OCI-LY7 (cell line): ENCODE measurements at regions of chr5 and their contacts with region 1.

Region 1: DNA sequence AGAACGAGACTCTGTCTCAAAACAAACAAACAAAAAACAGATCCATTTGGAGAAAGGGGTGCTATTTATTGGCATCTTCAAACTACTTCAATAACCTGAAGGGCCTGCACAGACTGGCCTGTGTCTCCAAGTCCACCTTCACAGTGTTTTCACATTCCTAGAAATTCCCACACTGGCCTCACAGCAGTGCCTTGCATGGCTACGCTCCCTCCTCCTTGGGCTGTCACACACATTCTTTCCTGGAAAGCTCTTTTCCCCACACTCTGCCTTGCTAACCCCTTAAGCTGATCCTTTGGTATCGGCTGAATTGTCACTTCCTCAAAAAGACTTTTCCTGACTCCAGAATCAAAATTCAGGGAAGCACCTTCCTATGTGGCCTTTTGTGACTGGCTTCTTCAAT is 19.8 kb downstream of the FAM151B start:
- DNase-seq: no peak
- H3K4me3 ChIP-seq: no peak overlapping the region
- H3K27ac ChIP-seq: no peak overlapping the region
- H3K4me1 ChIP-seq: no peaks in the 10 kb centered on the region
- CTCF ChIP-seq: no peak

Region 2: GRCh38 chr5:80268916-80269315 is 238.7 kb before region 1 on chr5:
- CTCF ChIA-PET with region 1: no interaction called
- POLR2A ChIA-PET with region 1: no interaction called
- intact Hi-C with region 1: no loop called
- DNase-seq: no peak
- H3K4me3 ChIP-seq: no peak overlapping the region
- H3K27ac ChIP-seq: no peak overlapping the region
- H3K4me1 ChIP-seq: peaks cover 21% of the 10 kb centered on the region
- CTCF ChIP-seq: no peak

Region 3: GRCh38 chr5:80487829-80488721 is 19.6 kb before region 1 on chr5 and contains the start of gene FAM151B:
- CTCF ChIA-PET with region 1: no interaction called
- POLR2A ChIA-PET with region 1: interaction called, 3 read pairs
- intact Hi-C with region 1: loop called (anchors 1 kb)
- DNase-seq: peak; percentile 51
- H3K4me3 ChIP-seq: peak within 1 kb of the TSS; percentile 54
- H3K27ac ChIP-seq: no peak within 1 kb of the TSS
- H3K4me1 ChIP-seq: no peaks in the 10 kb centered on the region
- CTCF ChIP-seq: no peak
- total RNA-seq, gene FAM151B: not detected in 2 replicates

Region 4: DNA sequence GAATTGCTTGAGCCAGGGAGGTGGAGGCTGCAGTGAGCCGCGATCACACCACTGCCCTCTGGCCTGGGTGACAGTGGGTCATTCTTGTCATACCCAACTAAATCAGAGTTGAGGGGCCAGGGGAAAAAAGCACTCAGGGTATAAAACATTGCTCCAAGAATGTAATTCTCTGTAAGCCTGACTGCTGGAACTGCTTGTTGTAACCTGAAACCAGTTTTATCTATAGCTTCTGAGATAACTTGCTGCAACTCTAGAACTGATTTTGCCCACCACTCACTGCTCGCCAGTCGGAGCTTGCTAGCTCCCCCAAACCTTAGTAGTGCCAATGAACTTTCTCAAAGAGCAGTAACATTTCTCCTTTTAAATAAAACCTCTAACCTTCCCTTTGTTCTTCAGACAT is 137.2 kb after region 1 on chr5:
- CTCF ChIA-PET with region 1: no interaction called
- POLR2A ChIA-PET with region 1: no interaction called
- intact Hi-C with region 1: no loop called
- DNase-seq: no peak
- H3K4me3 ChIP-seq: no peak overlapping the region
- H3K27ac ChIP-seq: no peak overlapping the region
- H3K4me1 ChIP-seq: no peaks in the 10 kb centered on the region
- CTCF ChIP-seq: no peak

Region 5: GRCh38 chr5:80736730-80737129 is 229.1 kb after region 1 on chr5:
- CTCF ChIA-PET with region 1: no interaction called
- POLR2A ChIA-PET with region 1: no interaction called
- intact Hi-C with region 1: no loop called
- DNase-seq: no peak
- H3K4me3 ChIP-seq: no peak overlapping the region
- H3K27ac ChIP-seq: no peak overlapping the region
- H3K4me1 ChIP-seq: no peaks in the 10 kb centered on the region
- CTCF ChIP-seq: no peak